ENCODE measurements at regions of chr1 and their contacts with region 1.

Region 1: DNA sequence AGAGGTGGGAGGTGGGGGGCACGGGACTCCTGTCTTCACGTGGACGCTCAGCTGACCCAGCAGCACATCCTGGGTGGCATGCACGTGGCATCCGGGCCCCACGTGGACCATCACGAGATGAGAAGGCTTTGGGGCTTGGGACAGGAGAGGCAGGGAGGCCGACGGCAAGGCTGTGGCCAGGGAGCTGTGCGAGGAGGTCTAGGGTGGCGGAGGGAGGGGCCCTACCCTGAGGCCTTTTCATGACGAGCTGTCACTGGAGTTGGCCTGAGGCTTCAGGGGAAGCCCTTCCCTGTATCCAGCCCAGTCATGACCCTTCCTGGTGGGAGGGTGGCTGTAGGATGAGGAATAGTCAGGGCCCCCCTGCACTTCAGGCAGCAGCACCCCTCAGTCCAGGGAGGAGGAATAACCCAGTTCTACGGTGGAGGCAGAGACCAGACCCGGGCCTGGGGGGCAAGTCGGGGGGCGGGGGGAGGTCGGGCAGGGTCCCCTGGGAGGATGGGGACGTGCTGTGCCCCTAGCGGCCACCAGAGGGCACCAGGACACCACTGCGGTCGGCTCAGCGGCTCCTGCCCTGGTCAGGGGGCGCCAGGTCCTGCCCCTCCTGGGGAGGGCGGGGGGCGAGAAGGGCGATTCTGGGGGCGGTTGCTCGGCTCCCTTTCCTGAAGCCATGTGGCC is 2.0 kb upstream of the PERM1 start:
- DNase-seq: no peak
- H3K4me3 ChIP-seq: 0 out of 2 replicates have a peak overlapping the region, but pooled peaks have one; percentile 21
- H3K27me3 ChIP-seq: no peaks in the 10 kb centered on the region
- CTCF ChIP-seq: peak; percentile 96

Region 2: DNA sequence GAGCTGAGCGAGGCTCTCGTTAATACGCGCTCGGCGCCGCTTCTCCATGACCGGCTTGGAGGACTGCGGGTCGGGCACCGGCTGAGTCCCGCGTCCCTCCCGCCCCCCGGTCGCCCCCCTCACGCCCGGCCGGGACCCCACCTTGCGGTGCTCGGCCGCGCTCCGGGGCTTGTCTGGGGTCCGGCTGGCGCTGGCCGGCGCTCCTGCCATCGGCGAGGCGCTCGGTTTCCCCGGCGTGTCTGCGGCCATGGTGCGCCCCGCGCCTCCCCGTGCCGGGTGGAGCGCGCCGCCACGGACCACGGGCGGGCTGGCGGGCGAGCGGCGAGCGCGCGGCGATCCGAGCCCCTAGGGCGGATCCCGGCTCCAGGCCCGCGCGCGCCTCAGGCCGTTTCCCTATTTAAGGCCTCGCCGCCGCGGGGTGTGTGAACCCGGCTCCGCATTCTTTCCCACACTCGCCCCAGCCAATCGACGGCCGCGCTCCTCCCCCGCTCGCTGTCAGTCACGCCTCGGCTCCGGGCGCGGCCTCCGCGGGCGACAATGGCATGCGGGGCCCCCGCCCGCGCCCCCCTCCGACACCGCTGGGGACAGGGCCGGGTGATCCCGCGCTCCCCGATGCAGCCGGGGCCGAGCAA is 15.9 kb after region 1 on chr1 and contains the start of gene HES4:
- CTCF ChIA-PET with region 1: interaction called, 62 read pairs
- POLR2A ChIA-PET with region 1: interaction called, 3 read pairs
- DNase-seq: peak; percentile 53
- H3K4me3 ChIP-seq: peak within 1 kb of the TSS; percentile 85
- H3K27me3 ChIP-seq: no peaks in the 10 kb centered on the region
- CTCF ChIP-seq: no peak
- polyA plus RNA-seq, gene HES4: 5.6 and 10.8 TPM in 2 replicates

Region 3: DNA sequence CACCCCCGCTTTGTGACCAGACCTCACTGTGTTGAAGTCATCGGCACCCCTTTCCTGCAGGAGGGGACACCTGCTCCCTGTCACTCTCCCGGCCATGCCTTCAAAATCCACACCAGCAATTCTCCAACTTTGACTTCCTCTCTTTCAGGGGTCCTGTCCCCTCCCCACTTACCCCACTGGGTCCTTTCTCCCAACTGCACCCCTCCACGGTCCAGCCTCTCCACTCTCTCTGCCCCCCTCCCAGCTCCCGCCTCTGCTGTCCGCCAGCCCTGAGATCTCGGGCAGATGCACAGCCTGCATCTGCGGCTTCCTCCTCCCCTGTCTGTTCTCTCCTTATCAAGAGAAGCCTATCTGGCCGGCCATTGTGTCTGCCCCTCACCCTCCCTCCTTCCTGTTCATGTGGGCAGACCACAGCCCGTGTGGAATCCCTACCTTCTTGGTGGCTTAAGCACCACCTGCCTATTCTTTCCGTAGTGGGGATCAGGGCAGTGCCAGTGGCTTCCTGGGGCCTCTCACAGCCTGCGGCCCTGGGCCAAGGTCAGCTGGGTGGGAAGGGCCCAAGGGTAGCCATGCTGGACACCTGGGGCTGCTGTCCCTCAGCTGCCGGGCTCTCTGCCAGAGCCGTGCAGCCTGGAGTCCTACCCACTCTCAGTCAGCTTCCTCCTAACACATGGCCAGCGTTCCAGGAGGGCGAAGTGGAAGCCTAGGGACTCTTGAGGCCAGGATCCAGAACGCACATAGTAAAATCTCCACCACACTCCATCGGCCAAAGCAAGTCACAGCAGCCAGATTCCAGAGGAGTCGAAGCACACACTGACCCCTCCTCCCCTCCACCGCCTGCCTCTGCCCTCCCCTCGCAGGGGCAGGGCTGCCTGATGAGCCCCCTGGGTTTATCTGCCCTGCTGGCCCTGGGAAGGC is 21.1 kb after region 1 on chr1:
- CTCF ChIA-PET with region 1: interaction called, 45 read pairs
- POLR2A ChIA-PET with region 1: interaction called, 3 read pairs
- DNase-seq: peak; percentile 45
- H3K4me3 ChIP-seq: no peak overlapping the region
- H3K27me3 ChIP-seq: no peaks in the 10 kb centered on the region
- CTCF ChIP-seq: no peak

Region 4: DNA sequence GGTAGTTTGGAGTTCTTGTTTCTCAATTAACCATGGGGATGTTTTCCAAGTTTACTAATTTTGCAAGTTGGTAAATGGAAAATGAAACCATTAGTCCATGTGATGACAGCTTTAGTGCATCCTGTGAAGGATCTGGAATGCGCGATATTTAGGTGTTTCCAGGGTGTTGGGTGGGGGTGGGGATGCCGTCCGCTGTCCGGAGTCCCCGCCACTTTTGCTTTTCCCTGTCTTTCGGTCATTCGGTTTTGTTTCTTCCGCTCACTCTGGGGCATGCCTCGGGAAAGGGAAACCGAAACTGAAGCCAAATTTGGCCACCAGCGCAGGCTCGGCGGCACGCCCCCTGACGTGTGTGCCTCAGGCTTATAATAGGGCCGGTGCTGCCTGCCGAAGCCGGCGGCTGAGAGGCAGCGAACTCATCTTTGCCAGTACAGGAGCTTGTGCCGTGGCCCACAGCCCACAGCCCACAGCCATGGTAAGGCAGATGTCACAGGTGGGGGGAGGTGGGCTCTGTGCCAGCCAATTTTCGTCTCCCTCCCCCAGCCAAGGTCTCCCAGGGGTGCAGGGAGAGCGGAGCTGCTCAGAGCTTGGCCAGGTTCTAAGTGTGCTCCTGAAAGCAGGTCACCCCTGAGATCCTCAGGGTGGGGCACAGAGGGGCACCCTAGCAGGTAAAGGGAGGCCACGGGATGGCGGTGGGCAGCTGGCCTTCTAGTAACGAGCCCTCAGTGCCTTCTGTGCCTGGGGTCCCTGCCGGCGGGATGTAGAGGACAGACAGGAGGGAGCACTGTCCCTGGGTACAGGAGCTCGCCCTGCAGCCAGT is 29.4 kb after region 1 on chr1 and contains the start of gene ISG15:
- CTCF ChIA-PET with region 1: interaction called, 15 read pairs
- POLR2A ChIA-PET with region 1: no interaction called
- DNase-seq: peak; percentile 49
- H3K4me3 ChIP-seq: peak within 1 kb of the TSS; percentile 71
- H3K27me3 ChIP-seq: no peaks in the 10 kb centered on the region
- CTCF ChIP-seq: no peak
- polyA plus RNA-seq, gene ISG15: 73.0 and 86.8 TPM in 2 replicates

Region 5: GRCh38 chr1:1024771-1025451 is 41.0 kb after region 1 on chr1:
- CTCF ChIA-PET with region 1: no interaction called
- POLR2A ChIA-PET with region 1: no interaction called
- DNase-seq: no peak
- H3K4me3 ChIP-seq: no peak overlapping the region
- H3K27me3 ChIP-seq: no peaks in the 10 kb centered on the region
- CTCF ChIP-seq: no peak

Region 6: DNA sequence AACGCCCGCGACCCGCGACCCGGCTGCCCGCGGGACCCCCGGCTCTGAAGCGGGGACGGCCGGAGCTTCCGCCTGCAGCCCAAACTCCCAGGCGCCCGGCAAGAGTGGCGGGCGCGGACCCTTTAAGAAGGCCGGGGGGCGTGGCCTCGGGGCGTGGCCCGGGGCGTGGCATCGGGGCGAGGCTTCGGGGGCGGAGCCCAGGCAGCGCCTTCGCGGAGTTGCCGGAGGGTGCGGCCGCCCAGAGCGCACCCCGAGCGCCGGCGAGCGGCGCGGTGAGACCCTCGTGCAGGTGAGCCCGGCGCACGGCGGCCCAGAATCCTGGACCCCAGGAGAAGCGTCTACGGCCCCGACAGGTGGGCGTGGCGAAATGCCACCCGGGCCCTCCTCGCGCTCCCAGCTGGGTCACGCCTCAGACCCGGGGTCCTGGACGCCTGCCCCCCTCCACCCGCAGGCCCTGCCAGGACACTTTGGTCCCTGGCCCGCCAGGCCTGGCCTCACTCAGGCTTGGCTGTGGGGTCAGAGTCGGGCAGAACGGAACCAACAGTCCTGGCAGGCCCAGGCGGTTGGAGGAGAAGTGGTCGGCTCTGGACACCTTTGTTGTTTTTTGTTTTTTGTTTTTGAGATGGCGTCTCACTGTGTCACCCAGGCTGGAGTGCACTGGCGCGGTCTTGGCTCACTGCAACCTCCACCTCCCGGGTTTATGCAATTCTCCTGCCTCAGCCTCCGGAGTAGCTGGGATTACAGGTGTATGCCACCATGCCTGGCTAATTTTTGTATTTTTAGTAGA is 75.8 kb after region 1 on chr1:
- CTCF ChIA-PET with region 1: interaction called, 157 read pairs
- POLR2A ChIA-PET with region 1: no interaction called
- DNase-seq: no peak
- H3K4me3 ChIP-seq: peak overlapping the region; percentile 49
- H3K27me3 ChIP-seq: no peaks in the 10 kb centered on the region; the same call in 1 of the 2 replicates
- CTCF ChIP-seq: no peak

Region 7: DNA sequence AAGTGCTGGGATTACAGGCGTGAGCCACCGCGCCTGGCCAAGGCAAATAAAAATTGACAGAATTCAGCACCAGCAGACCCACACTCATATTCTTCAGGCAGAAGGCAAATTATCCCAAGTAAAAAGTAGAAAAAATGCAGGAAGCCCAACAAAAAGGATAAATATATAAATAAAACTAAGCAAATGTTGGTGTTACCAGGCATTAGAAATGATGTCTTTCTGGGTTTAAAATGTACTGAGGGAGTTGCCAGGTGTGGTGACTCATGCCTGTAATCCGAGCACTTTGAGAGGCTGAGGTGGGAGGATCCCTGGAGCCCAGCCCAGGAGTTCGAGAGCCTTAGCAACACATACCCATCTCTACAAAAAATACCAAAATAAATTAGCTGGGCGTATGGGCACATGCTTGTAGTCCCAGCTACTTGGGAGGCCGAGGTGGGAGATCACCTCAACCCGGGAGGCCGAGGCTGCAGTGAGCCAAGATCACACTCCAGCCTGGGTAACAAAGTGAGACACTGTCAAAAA is 334.3 kb after region 1 on chr1:
- CTCF ChIA-PET with region 1: no interaction called
- POLR2A ChIA-PET with region 1: interaction called, 15 read pairs
- DNase-seq: peak; percentile 83
- H3K4me3 ChIP-seq: no peak overlapping the region
- H3K27me3 ChIP-seq: no peaks in the 10 kb centered on the region
- CTCF ChIP-seq: no peak

Region 8: DNA sequence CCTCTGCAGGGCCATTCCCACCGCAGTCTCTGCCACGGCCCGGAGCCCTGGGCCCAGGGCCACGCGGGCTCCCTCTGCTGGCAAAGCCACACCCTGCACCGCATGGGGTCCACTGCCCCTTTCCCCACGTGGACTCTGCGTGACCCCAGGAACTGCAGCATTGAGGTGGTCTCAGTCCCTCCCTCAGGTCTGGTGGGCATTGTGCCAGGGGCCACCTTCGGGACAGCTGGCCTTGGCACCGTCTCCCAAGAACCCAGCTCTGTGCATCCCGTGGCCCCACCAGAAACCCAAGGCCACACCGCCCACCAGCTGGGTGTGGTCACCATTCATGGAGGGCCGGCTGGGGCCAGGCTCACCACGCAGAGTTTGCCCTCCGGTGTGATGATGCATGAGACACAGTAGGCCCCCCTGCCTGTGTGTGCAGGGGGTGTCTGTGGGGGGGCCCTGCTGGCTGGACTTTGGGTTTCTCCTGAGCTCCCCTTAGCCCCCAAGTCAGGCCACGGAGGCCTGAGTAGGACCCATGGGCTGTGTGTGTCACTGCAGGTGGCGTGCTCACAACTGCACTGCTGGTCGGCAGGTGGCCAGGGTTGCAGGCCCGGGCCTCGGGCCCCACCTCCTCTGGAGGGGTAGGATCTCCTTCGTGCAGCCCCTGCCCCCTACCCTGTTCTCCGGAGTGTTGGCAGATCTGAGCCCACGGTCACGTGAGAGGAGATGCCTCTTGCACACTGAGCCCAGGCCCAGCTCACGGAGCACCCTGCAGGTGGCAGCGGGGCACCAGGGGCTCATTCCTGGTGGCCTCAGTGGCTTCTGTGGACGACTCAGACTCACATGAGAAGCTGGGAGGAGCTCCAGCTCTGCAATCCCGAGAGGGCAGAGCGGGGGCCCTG is 457.3 kb after region 1 on chr1:
- CTCF ChIA-PET with region 1: no interaction called
- POLR2A ChIA-PET with region 1: no interaction called
- DNase-seq: no peak
- H3K4me3 ChIP-seq: no peak overlapping the region
- H3K27me3 ChIP-seq: peaks cover 4% of the 10 kb centered on the region; the same call in 1 of the 2 replicates
- CTCF ChIP-seq: peak; percentile 92